ENCODE measurements at regions of chr1 and their contacts with region 1.

Region 1: GRCh38 chr1:193479187-193479586 is 292.8 kb upstream of the B3GALT2 start:
- DNase-seq: peak; percentile 18 to 95 (median 91)
- ATAC-seq: peak; percentile 97
- H3K4me3 ChIP-seq: peak overlapping the region; percentile 24
- H3K4me3 Mint-ChIP-seq: peak overlapping the region; percentile 23 to 72 (median 60)
- H3K27ac ChIP-seq: peak overlapping the region; percentile 37
- H3K27ac Mint-ChIP-seq: peak overlapping the region; percentile 85 to 99 (median 94)
- H3K4me1 ChIP-seq: peaks cover 31 to 38% of the 10 kb centered on the region in 2 donors
- H3K4me1 Mint-ChIP-seq: peaks cover 27 to 72% (median 56%) of the 10 kb centered on the region in 7 donors
- H3K27me3 ChIP-seq: no peaks in the 10 kb centered on the region
- H3K27me3 Mint-ChIP-seq: no peaks in the 10 kb centered on the region

Region 2: GRCh38 chr1:193121616-193122593 is 357.3 kb before region 1 on chr1 and contains the start of gene CDC73:
- CTCF ChIA-PET with region 1: no interaction called
- POLR2A ChIA-PET with region 1: no interaction called
- intact Hi-C with region 1: loop called in 1 of 2 experiments (anchors 5 kb)
- DNase-seq: peak; percentile 97 to 100 (median 99)
- ATAC-seq: peak; percentile 96
- H3K4me3 ChIP-seq: peak within 1 kb of the TSS; percentile 85
- H3K4me3 Mint-ChIP-seq: peak within 1 kb of the TSS; percentile 88 to 99 (median 95)
- H3K27ac ChIP-seq: peak within 1 kb of the TSS; percentile 91
- H3K27ac Mint-ChIP-seq: peak within 1 kb of the TSS; percentile 92 to 98 (median 96)
- H3K4me1 ChIP-seq: peaks cover 21 to 25% of the 10 kb centered on the region in 2 donors
- H3K4me1 Mint-ChIP-seq: peaks cover 33 to 68% (median 47%) of the 10 kb centered on the region in 7 donors
- H3K27me3 ChIP-seq: no peaks in the 10 kb centered on the region
- H3K27me3 Mint-ChIP-seq: peaks cover 0 to 11% (median 0%) of the 10 kb centered on the region in 5 donors
- total RNA-seq, gene CDC73: 57.6 to 65.0 (median 58.8) TPM

Region 3: DNA sequence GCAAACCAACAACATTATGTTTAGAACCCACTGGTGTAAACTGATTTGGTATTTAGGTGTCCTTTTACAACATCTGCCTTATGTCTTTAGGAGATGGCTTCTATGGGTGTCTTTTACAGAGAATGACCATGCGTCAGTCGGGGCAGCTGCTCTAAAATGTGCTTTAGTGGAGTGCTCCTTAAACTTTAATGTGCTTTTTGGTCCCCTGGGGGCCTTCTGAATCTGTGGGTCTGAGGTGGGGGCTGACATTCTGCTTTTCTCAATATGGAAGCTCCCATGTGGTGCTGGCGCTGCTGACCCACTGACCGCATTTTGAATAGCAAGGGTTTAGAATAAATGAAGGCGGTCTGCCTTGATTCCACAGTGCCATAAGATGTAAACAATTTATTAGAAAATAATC is 119.6 kb before region 1 on chr1:
- CTCF ChIA-PET with region 1: no interaction called
- POLR2A ChIA-PET with region 1: no interaction called
- intact Hi-C with region 1: no loop called
- DNase-seq: no peak
- ATAC-seq: no peak
- H3K4me3 ChIP-seq: no peak overlapping the region
- H3K4me3 Mint-ChIP-seq: no peak overlapping the region
- H3K27ac ChIP-seq: no peak overlapping the region
- H3K27ac Mint-ChIP-seq: no peak overlapping the region
- H3K4me1 ChIP-seq: no peaks in the 10 kb centered on the region
- H3K4me1 Mint-ChIP-seq: peaks cover 0 to 3% (median 0%) of the 10 kb centered on the region in 7 donors
- H3K27me3 ChIP-seq: no peaks in the 10 kb centered on the region
- H3K27me3 Mint-ChIP-seq: peaks cover 0 to 21% (median 5%) of the 10 kb centered on the region in 5 donors

Region 4: GRCh38 chr1:193406901-193407300 is 72.3 kb before region 1 on chr1:
- CTCF ChIA-PET with region 1: no interaction called
- POLR2A ChIA-PET with region 1: interaction called, 3 read pairs
- intact Hi-C with region 1: loop called (anchors 1 to 2 kb)
- DNase-seq: peak in 6 of 9 donors; percentile 30 to 54 (median 48)
- ATAC-seq: peak; percentile 70
- H3K4me3 ChIP-seq: no peak overlapping the region
- H3K4me3 Mint-ChIP-seq: peak overlapping the region in 3 of 10 donors; percentile 3 to 11 (median 5)
- H3K27ac ChIP-seq: no peak overlapping the region
- H3K27ac Mint-ChIP-seq: peak overlapping the region in 5 of 9 donors; percentile 0 to 68 (median 10)
- H3K4me1 ChIP-seq: peaks cover 4 to 11% of the 10 kb centered on the region in 2 donors
- H3K4me1 Mint-ChIP-seq: peaks cover 11 to 34% (median 24%) of the 10 kb centered on the region in 7 donors
- H3K27me3 ChIP-seq: no peaks in the 10 kb centered on the region
- H3K27me3 Mint-ChIP-seq: no peaks in the 10 kb centered on the region

Region 5: DNA sequence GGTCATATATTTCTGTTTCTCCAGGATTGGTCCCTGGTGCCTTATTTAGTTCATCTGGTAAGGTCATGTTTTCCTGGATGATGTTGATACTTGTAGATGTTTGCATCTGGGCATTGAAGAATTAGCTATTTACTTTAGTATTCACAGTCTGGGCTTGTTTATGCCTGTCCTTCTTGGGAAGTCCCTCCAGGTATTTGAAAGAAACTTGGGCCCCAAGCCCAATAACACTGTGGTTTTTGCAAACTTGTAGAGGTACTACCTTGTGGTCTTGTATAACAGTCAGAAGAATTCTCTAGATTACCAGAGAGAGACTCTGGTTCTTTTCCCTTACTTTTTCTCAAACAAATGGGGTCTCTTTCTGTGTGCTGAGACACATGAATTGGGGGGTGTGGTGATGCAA is 41.4 kb before region 1 on chr1:
- CTCF ChIA-PET with region 1: no interaction called
- POLR2A ChIA-PET with region 1: no interaction called
- intact Hi-C with region 1: loop called in 1 of 2 experiments (anchors 2 kb)
- DNase-seq: no peak
- ATAC-seq: peak; percentile 31
- H3K4me3 ChIP-seq: no peak overlapping the region
- H3K4me3 Mint-ChIP-seq: peak overlapping the region in 1 of 10 donors; percentile 72
- H3K27ac ChIP-seq: no peak overlapping the region
- H3K27ac Mint-ChIP-seq: peak overlapping the region in 3 of 9 donors; percentile 36 to 92 (median 60)
- H3K4me1 ChIP-seq: peaks cover 5 to 12% of the 10 kb centered on the region in 2 donors
- H3K4me1 Mint-ChIP-seq: peaks cover 0 to 46% (median 12%) of the 10 kb centered on the region in 7 donors
- H3K27me3 ChIP-seq: no peaks in the 10 kb centered on the region
- H3K27me3 Mint-ChIP-seq: no peaks in the 10 kb centered on the region

Region 6: DNA sequence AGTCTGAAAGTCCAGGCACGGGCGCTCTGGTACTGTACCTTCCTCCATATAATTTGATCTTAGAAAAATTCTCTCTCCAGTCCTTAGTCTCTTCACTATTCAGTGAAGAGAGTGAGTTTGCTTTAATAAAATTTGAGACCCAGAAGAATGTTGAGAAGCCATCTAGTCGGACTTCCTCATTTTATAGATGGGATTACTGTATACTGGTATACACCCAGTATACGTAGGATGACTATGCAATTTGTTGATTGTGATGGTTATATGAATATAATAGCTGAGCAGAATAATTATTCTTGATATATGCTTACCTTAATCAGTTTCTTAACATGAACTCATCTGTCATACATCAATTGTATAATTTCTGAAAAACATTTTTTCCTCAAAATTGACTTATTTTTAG is 35.2 kb after region 1 on chr1:
- CTCF ChIA-PET with region 1: no interaction called
- POLR2A ChIA-PET with region 1: interaction called, 5 read pairs
- intact Hi-C with region 1: loop called in 1 of 2 experiments (anchors 2 kb)
- DNase-seq: no peak
- ATAC-seq: no peak
- H3K4me3 ChIP-seq: no peak overlapping the region
- H3K4me3 Mint-ChIP-seq: no peak overlapping the region
- H3K27ac ChIP-seq: no peak overlapping the region
- H3K27ac Mint-ChIP-seq: no peak overlapping the region
- H3K4me1 ChIP-seq: no peaks in the 10 kb centered on the region
- H3K4me1 Mint-ChIP-seq: peaks cover 0 to 3% (median 0%) of the 10 kb centered on the region in 7 donors
- H3K27me3 ChIP-seq: no peaks in the 10 kb centered on the region
- H3K27me3 Mint-ChIP-seq: no peaks in the 10 kb centered on the region

Region 7: GRCh38 chr1:194052514-194053333 is 573.5 kb after region 1 on chr1:
- CTCF ChIA-PET with region 1: no interaction called
- POLR2A ChIA-PET with region 1: no interaction called
- intact Hi-C with region 1: loop called in 1 of 2 experiments (anchors 5 kb)
- DNase-seq: peak in 6 of 9 donors; percentile 21 to 54 (median 44)
- ATAC-seq: peak; percentile 56
- H3K4me3 ChIP-seq: peak overlapping the region; percentile 9
- H3K4me3 Mint-ChIP-seq: peak overlapping the region; percentile 41 to 83 (median 71)
- H3K27ac ChIP-seq: peak overlapping the region; percentile 63
- H3K27ac Mint-ChIP-seq: peak overlapping the region; percentile 93 to 98 (median 96)
- H3K4me1 ChIP-seq: peaks cover 7 to 61% of the 10 kb centered on the region in 2 donors
- H3K4me1 Mint-ChIP-seq: peaks cover 43 to 82% (median 69%) of the 10 kb centered on the region in 7 donors
- H3K27me3 ChIP-seq: no peaks in the 10 kb centered on the region
- H3K27me3 Mint-ChIP-seq: no peaks in the 10 kb centered on the region

Measured in naive thymus-derived CD4-positive, alpha-beta T cell (primary cell).